Naive thymus-derived CD4-positive, alpha-beta T cell (primary cell): ENCODE measurements at regions of chr20 and their contacts with region 1.

Region 1: GRCh38 chr20:10469599-10469998 is 34.5 kb downstream of the SLX4IP start:
- DNase-seq: peak in 2 of 9 donors; percentile 20 to 21
- ATAC-seq: peak; percentile 62
- H3K4me3 ChIP-seq: no peak overlapping the region
- H3K4me3 Mint-ChIP-seq: no peak overlapping the region
- H3K27ac ChIP-seq: no peak overlapping the region
- H3K27ac Mint-ChIP-seq: peak overlapping the region in 1 of 9 donors; percentile 16
- H3K4me1 ChIP-seq: no peaks in the 10 kb centered on the region
- H3K4me1 Mint-ChIP-seq: peaks cover under 1 to 18% (median 11%) of the 10 kb centered on the region in 7 donors
- H3K27me3 ChIP-seq: no peaks in the 10 kb centered on the region
- H3K27me3 Mint-ChIP-seq: no peaks in the 10 kb centered on the region

Region 2: GRCh38 chr20:10402938-10403608 is 66.5 kb before region 1 on chr20:
- CTCF ChIA-PET with region 1: no interaction called
- POLR2A ChIA-PET with region 1: no interaction called
- intact Hi-C with region 1: no loop called
- DNase-seq: no peak
- ATAC-seq: no peak
- H3K4me3 ChIP-seq: no peak overlapping the region
- H3K4me3 Mint-ChIP-seq: no peak overlapping the region
- H3K27ac ChIP-seq: no peak overlapping the region
- H3K27ac Mint-ChIP-seq: no peak overlapping the region
- H3K4me1 ChIP-seq: no peaks in the 10 kb centered on the region
- H3K4me1 Mint-ChIP-seq: peaks cover 0 to 11% (median 0%) of the 10 kb centered on the region in 7 donors
- H3K27me3 ChIP-seq: no peaks in the 10 kb centered on the region
- H3K27me3 Mint-ChIP-seq: no peaks in the 10 kb centered on the region

Region 3: GRCh38 chr20:10434832-10435812 is 34.5 kb before region 1 on chr20 and contains the start of gene SLX4IP:
- CTCF ChIA-PET with region 1: no interaction called
- POLR2A ChIA-PET with region 1: no interaction called
- intact Hi-C with region 1: no loop called
- DNase-seq: peak; percentile 46 to 85 (median 82)
- ATAC-seq: peak; percentile 76
- H3K4me3 ChIP-seq: peak within 1 kb of the TSS; percentile 99
- H3K4me3 Mint-ChIP-seq: peak within 1 kb of the TSS; percentile 89 to 99 (median 96)
- H3K27ac ChIP-seq: peak within 1 kb of the TSS; percentile 82
- H3K27ac Mint-ChIP-seq: peak within 1 kb of the TSS; percentile 90 to 99 (median 97)
- H3K4me1 ChIP-seq: peaks cover 0 to 4% of the 10 kb centered on the region in 2 donors
- H3K4me1 Mint-ChIP-seq: peaks cover 30 to 59% (median 48%) of the 10 kb centered on the region in 7 donors
- H3K27me3 ChIP-seq: no peaks in the 10 kb centered on the region
- H3K27me3 Mint-ChIP-seq: no peaks in the 10 kb centered on the region
- total RNA-seq, gene SLX4IP: 4.2 to 8.2 (median 6.5) TPM

Region 4: DNA sequence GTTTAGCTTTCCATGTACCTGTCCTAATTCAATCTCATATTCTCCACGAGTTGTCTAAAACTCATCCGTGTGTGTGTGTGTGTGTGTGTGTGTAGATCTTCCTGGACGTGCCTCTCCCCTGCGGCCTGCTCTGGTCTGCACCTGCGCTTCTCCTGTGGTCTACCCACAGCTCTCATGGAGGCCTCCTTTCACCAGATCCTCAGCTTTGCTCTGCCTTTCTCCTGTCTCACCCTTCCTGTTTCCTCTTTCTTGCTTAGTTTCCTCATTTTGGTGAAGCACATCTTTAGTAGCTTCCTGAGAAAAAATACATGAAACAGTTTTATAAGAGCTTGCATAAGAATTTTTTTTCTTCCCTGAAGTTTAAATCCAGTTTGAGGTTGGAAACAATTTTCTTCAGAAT is 16.4 kb before region 1 on chr20:
- CTCF ChIA-PET with region 1: no interaction called
- POLR2A ChIA-PET with region 1: no interaction called
- intact Hi-C with region 1: loop called in 1 of 2 experiments (anchors 2 kb)
- DNase-seq: peak in 3 of 9 donors; percentile 7 to 32 (median 11)
- ATAC-seq: peak; percentile 82
- H3K4me3 ChIP-seq: no peak overlapping the region
- H3K4me3 Mint-ChIP-seq: peak overlapping the region in 9 of 10 donors; percentile 52 to 74 (median 61)
- H3K27ac ChIP-seq: no peak overlapping the region
- H3K27ac Mint-ChIP-seq: peak overlapping the region; percentile 64 to 93 (median 79)
- H3K4me1 ChIP-seq: peaks cover 0 to 6% of the 10 kb centered on the region in 2 donors
- H3K4me1 Mint-ChIP-seq: peaks cover 17 to 23% (median 21%) of the 10 kb centered on the region in 7 donors
- H3K27me3 ChIP-seq: no peaks in the 10 kb centered on the region
- H3K27me3 Mint-ChIP-seq: no peaks in the 10 kb centered on the region

Region 5: GRCh38 chr20:10536531-10536930 is 66.9 kb after region 1 on chr20:
- CTCF ChIA-PET with region 1: no interaction called
- POLR2A ChIA-PET with region 1: no interaction called
- intact Hi-C with region 1: loop called in 1 of 2 experiments (anchors 1 kb)
- DNase-seq: peak in 1 of 9 donors; percentile 9
- ATAC-seq: no peak
- H3K4me3 ChIP-seq: no peak overlapping the region
- H3K4me3 Mint-ChIP-seq: no peak overlapping the region
- H3K27ac ChIP-seq: no peak overlapping the region
- H3K27ac Mint-ChIP-seq: no peak overlapping the region
- H3K4me1 ChIP-seq: peaks cover 0 to 13% of the 10 kb centered on the region in 2 donors
- H3K4me1 Mint-ChIP-seq: peaks cover 10 to 34% (median 25%) of the 10 kb centered on the region in 7 donors
- H3K27me3 ChIP-seq: no peaks in the 10 kb centered on the region
- H3K27me3 Mint-ChIP-seq: no peaks in the 10 kb centered on the region

Region 6: GRCh38 chr20:10553326-10553984 is 83.9 kb after region 1 on chr20:
- CTCF ChIA-PET with region 1: no interaction called
- POLR2A ChIA-PET with region 1: no interaction called
- intact Hi-C with region 1: loop called in 1 of 2 experiments (anchors 5 kb)
- DNase-seq: peak in 3 of 9 donors; percentile 11 to 37 (median 20)
- ATAC-seq: peak; percentile 49
- H3K4me3 ChIP-seq: no peak overlapping the region
- H3K4me3 Mint-ChIP-seq: no peak overlapping the region
- H3K27ac ChIP-seq: no peak overlapping the region
- H3K27ac Mint-ChIP-seq: no peak overlapping the region
- H3K4me1 ChIP-seq: peaks cover 0 to 5% of the 10 kb centered on the region in 2 donors
- H3K4me1 Mint-ChIP-seq: peaks cover 24 to 42% (median 37%) of the 10 kb centered on the region in 7 donors
- H3K27me3 ChIP-seq: no peaks in the 10 kb centered on the region
- H3K27me3 Mint-ChIP-seq: peaks cover 0 to 2% (median 0%) of the 10 kb centered on the region in 5 donors

Region 7: GRCh38 chr20:11204926-11205768 is 735.5 kb after region 1 on chr20:
- CTCF ChIA-PET with region 1: no interaction called
- POLR2A ChIA-PET with region 1: no interaction called
- intact Hi-C with region 1: loop called in 1 of 2 experiments (anchors 10 kb)
- DNase-seq: peak in 2 of 9 donors; percentile 0 to 2
- ATAC-seq: peak; percentile 66
- H3K4me3 ChIP-seq: no peak overlapping the region
- H3K4me3 Mint-ChIP-seq: no peak overlapping the region
- H3K27ac ChIP-seq: no peak overlapping the region
- H3K27ac Mint-ChIP-seq: no peak overlapping the region
- H3K4me1 ChIP-seq: no peaks in the 10 kb centered on the region
- H3K4me1 Mint-ChIP-seq: peaks cover 0 to 4% (median 0%) of the 10 kb centered on the region in 7 donors
- H3K27me3 ChIP-seq: no peaks in the 10 kb centered on the region
- H3K27me3 Mint-ChIP-seq: peaks cover 0 to 5% (median 0%) of the 10 kb centered on the region in 5 donors

Region 8: DNA sequence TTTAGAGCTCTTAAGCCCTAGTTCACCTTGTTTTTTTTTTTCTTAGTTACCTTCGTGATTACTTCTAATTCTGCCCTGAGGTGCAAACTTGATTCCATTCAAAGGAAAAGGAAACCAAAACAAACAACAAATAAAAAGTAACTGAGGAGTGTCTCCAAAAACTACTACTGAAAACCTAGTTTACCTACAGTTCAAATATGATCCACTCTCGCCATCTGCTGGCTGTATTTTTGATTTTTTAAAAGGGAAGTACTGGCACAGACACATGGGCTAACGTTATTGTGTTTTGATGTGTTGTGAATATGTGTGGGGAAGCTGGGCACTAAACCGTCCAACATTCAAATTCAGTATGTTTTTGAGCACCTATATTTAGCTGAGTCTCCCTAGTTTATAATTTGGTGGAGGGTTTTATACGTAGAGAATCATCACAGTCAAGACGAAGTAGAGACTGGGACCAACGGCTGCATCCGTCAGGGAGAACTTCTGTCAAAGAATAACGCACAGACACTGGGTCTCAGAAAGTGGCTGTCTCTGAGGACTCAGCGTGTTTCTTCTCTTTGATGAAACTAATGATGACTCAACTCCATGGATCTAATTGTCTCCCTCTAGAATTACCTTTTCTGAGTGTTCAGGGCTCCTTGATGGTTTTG is 1074.6 kb after region 1 on chr20:
- CTCF ChIA-PET with region 1: no interaction called
- POLR2A ChIA-PET with region 1: no interaction called
- intact Hi-C with region 1: loop called in 1 of 2 experiments (anchors 5 kb)
- DNase-seq: no peak
- ATAC-seq: no peak
- H3K4me3 ChIP-seq: no peak overlapping the region
- H3K4me3 Mint-ChIP-seq: no peak overlapping the region
- H3K27ac ChIP-seq: no peak overlapping the region
- H3K27ac Mint-ChIP-seq: no peak overlapping the region
- H3K4me1 ChIP-seq: no peaks in the 10 kb centered on the region
- H3K4me1 Mint-ChIP-seq: peaks cover 0 to 2% (median 0%) of the 10 kb centered on the region in 7 donors
- H3K27me3 ChIP-seq: no peaks in the 10 kb centered on the region
- H3K27me3 Mint-ChIP-seq: no peaks in the 10 kb centered on the region